GM18951 (cell line): ENCODE measurements at regions of chr11 and their contacts with region 1.

Region 1: GRCh38 chr11:1827095-1827813 is 7.5 kb upstream of the SYT8 start:
- POLR2A ChIP-seq: no peak

Region 2: DNA sequence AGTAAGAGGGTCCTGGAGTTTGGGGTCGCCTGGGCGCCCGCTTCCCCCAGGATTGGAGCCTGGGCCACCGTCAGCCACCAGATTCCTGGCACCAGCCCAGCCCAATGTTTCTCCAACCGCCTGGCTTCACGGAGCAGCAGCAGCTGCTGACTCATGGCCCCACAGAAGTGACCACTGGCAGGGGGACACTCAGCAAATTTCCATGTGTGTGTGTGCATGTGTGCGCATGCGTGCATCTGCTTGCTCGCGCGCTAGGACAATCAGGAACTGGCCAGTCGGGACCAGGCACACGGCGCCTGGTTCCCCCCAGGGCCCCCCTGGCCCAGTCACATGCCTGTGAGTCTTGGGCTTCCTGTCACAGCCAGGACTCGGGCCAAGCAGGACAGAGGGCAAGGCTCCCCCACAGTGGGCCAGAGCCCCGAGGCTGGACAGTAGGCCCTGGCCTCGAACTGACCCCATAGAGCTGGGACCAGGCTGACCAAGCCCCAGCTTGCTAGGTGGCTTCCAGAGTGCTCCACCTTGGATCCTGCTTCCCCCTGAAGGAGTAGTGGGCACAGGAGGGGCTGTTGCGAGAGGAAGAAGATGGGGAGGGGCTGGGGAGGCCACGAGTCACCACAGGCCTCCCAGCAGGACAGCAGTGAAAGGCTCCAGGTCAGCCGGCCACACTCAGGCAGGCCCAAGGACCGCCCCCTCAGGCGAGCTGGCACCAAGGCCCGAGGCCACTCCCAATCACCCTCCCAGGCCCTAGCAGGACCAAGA is 66.7 kb before region 1 on chr11:
- in situ Hi-C with region 1: no loop called
- POLR2A ChIP-seq: no peak

Region 3: DNA sequence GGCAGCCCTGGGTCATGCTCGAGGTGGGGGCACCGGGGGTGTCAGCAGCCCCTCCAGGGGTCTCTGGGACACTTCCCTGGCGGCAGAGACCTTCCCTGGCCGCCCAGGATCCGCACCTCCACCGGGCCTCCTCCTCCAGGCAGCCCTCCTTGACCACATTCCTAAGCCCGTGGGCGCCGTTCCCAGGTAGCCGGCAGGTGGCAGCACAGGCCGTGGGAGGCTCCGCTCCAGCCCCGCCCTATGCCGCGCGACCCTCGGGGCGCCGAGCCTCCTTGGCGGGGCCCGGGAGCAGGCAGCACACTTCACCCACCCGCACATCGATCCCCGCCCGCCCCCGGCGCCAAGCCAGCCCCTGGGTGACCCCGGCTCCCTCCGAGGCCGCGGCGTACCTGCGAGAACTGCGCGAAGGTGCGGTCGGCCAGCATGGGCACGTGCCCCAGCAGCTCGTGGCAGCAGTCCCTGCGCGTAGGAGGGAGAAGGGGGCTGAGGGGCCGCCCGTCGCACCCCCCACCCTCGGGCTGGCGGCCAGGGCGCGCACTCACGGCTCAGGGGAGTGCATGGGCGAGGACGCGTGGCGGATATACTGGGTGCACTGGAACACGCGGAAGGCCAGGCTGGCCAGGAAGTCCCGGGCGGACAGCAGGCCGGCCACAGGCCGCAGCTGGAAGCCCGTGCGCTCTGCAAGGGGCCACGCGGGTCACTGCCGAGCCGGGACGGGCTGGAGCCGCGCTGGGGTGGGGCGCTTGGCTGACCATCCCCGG is 339.0 kb after region 1 on chr11:
- in situ Hi-C with region 1: loop called (anchors 10 kb)
- POLR2A ChIP-seq: no peak